Sigmoid colon (tissue), 7 donors: ENCODE measurements at regions of chr15 and their contacts with region 1.

Region 1: GRCh38 chr15:44426975-44427755 is at the start of gene CTDSPL2:
- DNase-seq: peak; percentile 99
- H3K4me3 ChIP-seq: peak within 1 kb of the TSS; percentile 66 to 89 (median 82)
- H3K27ac ChIP-seq: peak within 1 kb of the TSS; percentile 92 to 95 (median 94)
- H3K4me1 ChIP-seq: peaks cover 0 to 33% (median 26%) of the 10 kb centered on the region in 4 donors
- H3K27me3 ChIP-seq: no peaks in the 10 kb centered on the region
- CTCF ChIP-seq: peak in 2 of 4 experiments; percentile 14 to 19
- EP300 ChIP-seq: no peak
- POLR2A ChIP-seq: peak; percentile 29 to 55
- total RNA-seq, gene CTDSPL2: 25.4 to 57.8 (median 44.9) TPM

Region 2: DNA sequence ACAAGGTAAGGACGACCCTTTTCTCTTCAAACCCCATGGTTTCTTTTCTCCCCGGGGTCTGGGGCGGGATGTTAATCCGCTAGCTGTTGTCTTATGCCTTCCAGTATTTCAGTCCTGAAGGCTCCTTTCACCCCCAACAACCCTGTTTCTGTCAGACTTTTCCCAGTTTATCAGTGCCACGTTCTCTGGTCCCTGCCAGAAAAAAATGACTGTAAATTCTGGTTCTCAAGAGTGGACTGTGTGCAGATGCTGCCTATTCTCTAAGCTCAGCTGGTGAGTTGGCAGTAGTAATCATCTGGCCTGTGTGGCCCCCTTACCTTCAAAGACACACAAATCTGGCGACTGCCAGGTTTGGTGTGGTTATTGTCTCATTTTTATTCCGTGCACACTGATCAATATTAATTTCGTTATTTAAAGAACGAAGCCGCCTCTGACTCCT is 137.8 kb before region 1 on chr15:
- intact Hi-C with region 1: loop called (anchors 2 kb)
- DNase-seq: no peak
- H3K4me3 ChIP-seq: peak overlapping the region; percentile 71 to 95 (median 90)
- H3K27ac ChIP-seq: peak overlapping the region; percentile 92 to 93 (median 93)
- H3K4me1 ChIP-seq: peaks cover 5 to 34% (median 33%) of the 10 kb centered on the region in 4 donors
- H3K27me3 ChIP-seq: no peaks in the 10 kb centered on the region
- CTCF ChIP-seq: no peak
- EP300 ChIP-seq: no peak
- POLR2A ChIP-seq: no peak

Region 3: GRCh38 chr15:44536962-44537734 is 110.0 kb after region 1 on chr15 and contains the start of gene EIF3J:
- intact Hi-C with region 1: loop called (anchors 2 kb)
- DNase-seq: peak; percentile 98
- H3K4me3 ChIP-seq: peak within 1 kb of the TSS; percentile 80 to 100 (median 90)
- H3K27ac ChIP-seq: peak within 1 kb of the TSS; percentile 95 to 99 (median 98)
- H3K4me1 ChIP-seq: peaks cover 0 to 53% (median 47%) of the 10 kb centered on the region in 4 donors
- H3K27me3 ChIP-seq: no peaks in the 10 kb centered on the region
- CTCF ChIP-seq: no peak
- EP300 ChIP-seq: no peak
- POLR2A ChIP-seq: peak; percentile 26 to 57
- total RNA-seq, gene EIF3J: 50.4 to 92.0 (median 56.7) TPM